Body of pancreas (tissue), 4 donors: ENCODE measurements at regions of chr20 and their contacts with region 1.

Region 1: GRCh38 chr20:35699127-35699975 is at the starts of genes NFS1 and ROMO1:
- DNase-seq: peak; percentile 80 to 85 (median 83)
- ATAC-seq: peak; percentile 90
- H3K4me3 ChIP-seq: peak within 1 kb of the TSS; percentile 67 to 88
- H3K27ac ChIP-seq: peak within 1 kb of the TSS; percentile 64 to 92 (median 83)
- H3K4me1 ChIP-seq: peaks cover 21% of the 10 kb centered on the region
- H3K27me3 ChIP-seq: no peaks in the 10 kb centered on the region
- CTCF ChIP-seq: peak in 3 of 7 experiments; percentile 10 to 42 (median 30)
- POLR2A ChIP-seq: peak; percentile 35 to 77 (median 72)
- total RNA-seq, gene NFS1: 15.8 to 22.1 TPM
- total RNA-seq, gene ROMO1: 55.0 to 192 TPM

Region 2: GRCh38 chr20:35601008-35601973 is 98.1 kb before region 1 on chr20:
- intact Hi-C with region 1: loop called (anchors 10 kb)
- DNase-seq: peak; percentile 82 to 83 (median 82)
- ATAC-seq: peak; percentile 85
- H3K4me3 ChIP-seq: peak overlapping the region in 1 of 2 donors; percentile 13
- H3K27ac ChIP-seq: no peak overlapping the region
- H3K4me1 ChIP-seq: peaks cover 29% of the 10 kb centered on the region
- H3K27me3 ChIP-seq: no peaks in the 10 kb centered on the region
- CTCF ChIP-seq: peak; percentile 9 to 64 (median 52)
- POLR2A ChIP-seq: peak in 1 of 3 donors; percentile 23